HepG2 (cell line): ENCODE measurements at regions of chr7 and their contacts with region 1.

Region 1: DNA sequence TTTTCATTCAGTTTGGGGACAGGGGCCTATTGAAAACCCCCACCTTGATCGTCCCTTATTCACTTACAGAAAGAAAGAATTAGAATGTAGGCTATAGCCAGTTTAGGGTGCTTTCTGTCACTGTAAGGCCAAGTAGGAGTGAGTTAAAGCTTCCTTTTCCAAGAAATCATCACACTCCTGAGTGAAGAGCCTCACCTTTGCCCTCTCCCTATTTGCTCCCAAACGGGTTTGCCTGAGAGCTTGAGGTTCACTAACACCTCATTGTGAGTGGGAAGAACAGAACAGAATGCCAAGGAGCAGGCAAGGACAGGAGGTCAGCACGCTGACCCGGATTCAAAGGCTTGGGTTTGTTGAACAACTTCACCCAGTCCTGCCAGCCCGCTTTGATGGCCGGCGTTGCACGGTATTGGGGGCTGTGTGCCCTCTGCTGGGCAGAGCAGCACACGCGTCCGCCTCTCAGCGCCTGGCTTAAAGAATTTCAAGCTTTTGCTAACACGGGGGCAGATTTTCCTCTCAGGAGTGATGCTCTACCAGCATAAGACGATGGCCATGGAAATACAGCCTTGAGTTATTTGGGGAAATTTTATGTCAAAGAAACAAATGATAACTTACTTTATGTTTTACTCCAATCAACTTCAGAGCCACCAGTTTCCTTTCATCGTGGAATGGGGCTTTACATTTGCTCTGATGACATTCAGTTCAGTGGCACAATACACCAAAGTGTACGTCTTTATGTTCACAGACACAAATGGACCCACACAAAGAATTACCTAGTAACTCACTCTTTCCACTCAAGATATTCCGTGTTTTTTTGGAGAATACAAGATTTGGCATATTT is 470.0 kb downstream of the SUGCT start:
- DNase-seq: peak; percentile 29
- ATAC-seq: peak; percentile 99
- H3K4me3 ChIP-seq: no peak overlapping the region
- H3K27ac ChIP-seq: no peak overlapping the region
- H3K4me1 ChIP-seq: peaks cover 9% of the 10 kb centered on the region
- H3K27me3 ChIP-seq: no peaks in the 10 kb centered on the region
- CTCF ChIP-seq: peak; percentile 86
- EP300 ChIP-seq: peak in 1 of 2 experiments; percentile 9; a peak in 1 of 4 replicates
- POLR2A ChIP-seq: no peak
- RAD21 ChIP-seq: peak; percentile 91

Region 2: DNA sequence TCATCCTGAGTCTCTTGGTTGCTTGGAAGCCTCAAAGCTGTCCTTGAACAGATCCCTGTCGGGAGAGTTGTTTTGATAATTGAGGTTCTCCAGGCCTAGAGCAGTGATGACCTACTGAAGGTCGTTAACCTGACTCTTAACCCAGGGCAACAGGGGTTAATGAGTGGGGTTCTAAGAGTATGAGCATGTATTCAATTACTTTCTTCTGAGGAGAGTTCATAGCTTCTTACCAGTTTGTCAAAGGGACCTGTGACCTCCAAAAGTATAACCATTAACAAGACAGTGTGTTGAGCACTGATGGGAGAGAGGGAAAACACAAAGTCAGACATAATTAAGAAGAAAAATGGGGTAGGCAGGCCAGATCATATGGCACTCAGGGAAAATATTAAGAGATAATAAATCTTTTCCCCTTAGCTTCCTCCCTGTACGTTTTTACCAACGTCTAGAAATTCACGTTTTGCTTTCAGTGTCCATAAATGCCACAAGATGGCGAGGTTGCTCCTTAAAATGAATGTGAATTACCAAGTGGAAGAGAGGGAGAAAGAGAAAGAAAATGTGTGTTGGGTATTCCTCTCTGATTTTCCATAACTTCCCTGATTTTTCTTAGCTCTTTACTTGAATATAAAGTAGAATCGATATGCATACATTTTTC is 372.5 kb before region 1 on chr7:
- CTCF ChIA-PET with region 1: no interaction called
- POLR2A ChIA-PET with region 1: no interaction called
- in situ Hi-C with region 1: no loop called
- intact Hi-C with region 1: loop called (anchors 2 kb)
- DNase-seq: peak; percentile 43
- ATAC-seq: peak; percentile 75
- H3K4me3 ChIP-seq: no peak overlapping the region
- H3K27ac ChIP-seq: no peak overlapping the region
- H3K4me1 ChIP-seq: no peaks in the 10 kb centered on the region; the same call in 1 of the 2 replicates
- H3K27me3 ChIP-seq: no peaks in the 10 kb centered on the region
- CTCF ChIP-seq: peak; percentile 71
- EP300 ChIP-seq: no peak
- POLR2A ChIP-seq: no peak
- RAD21 ChIP-seq: no peak

Region 3: GRCh38 chr7:40329601-40330153 is 275.1 kb before region 1 on chr7:
- CTCF ChIA-PET with region 1: interaction called, 29 read pairs
- POLR2A ChIA-PET with region 1: no interaction called
- in situ Hi-C with region 1: loop called (anchors 5 kb)
- intact Hi-C with region 1: loop called (anchors 1 kb)
- DNase-seq: peak; percentile 52
- ATAC-seq: peak; percentile 52; the same call in 2 of the 3 replicates
- H3K4me3 ChIP-seq: no peak overlapping the region
- H3K27ac ChIP-seq: no peak overlapping the region
- H3K4me1 ChIP-seq: no peaks in the 10 kb centered on the region
- H3K27me3 ChIP-seq: no peaks in the 10 kb centered on the region
- CTCF ChIP-seq: peak; percentile 79
- EP300 ChIP-seq: no peak
- POLR2A ChIP-seq: no peak
- RAD21 ChIP-seq: peak; percentile 80

Region 4: GRCh38 chr7:40429826-40430225 is 175.0 kb before region 1 on chr7:
- CTCF ChIA-PET with region 1: no interaction called
- POLR2A ChIA-PET with region 1: no interaction called
- in situ Hi-C with region 1: no loop called
- intact Hi-C with region 1: no loop called
- DNase-seq: no peak
- ATAC-seq: no peak
- H3K4me3 ChIP-seq: no peak overlapping the region
- H3K27ac ChIP-seq: no peak overlapping the region
- H3K4me1 ChIP-seq: no peaks in the 10 kb centered on the region
- H3K27me3 ChIP-seq: no peaks in the 10 kb centered on the region
- CTCF ChIP-seq: no peak
- EP300 ChIP-seq: no peak
- POLR2A ChIP-seq: no peak
- RAD21 ChIP-seq: no peak

Region 5: DNA sequence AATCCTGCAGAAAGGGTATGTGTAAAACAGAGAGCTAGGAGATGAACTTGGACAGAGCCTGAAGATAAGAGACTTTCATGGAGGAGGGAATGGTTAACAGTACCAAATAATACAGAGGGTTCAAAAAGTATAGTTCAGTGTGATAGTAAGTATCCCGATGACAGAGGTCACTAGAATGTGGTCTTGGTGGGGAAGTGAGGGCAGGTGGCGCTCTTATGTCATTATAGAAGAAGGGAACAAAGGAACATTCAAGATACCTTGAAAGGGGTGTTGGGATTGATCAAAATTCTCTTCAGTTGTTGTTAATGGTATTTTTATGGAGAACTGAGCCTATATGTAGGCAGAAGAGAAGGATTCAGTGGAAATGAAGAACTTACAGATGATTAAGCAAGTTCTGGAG is 157.5 kb before region 1 on chr7:
- CTCF ChIA-PET with region 1: interaction called, 5 read pairs
- POLR2A ChIA-PET with region 1: no interaction called
- in situ Hi-C with region 1: no loop called
- intact Hi-C with region 1: loop called (anchors 2 kb)
- DNase-seq: no peak
- ATAC-seq: no peak
- H3K4me3 ChIP-seq: no peak overlapping the region
- H3K27ac ChIP-seq: no peak overlapping the region
- H3K4me1 ChIP-seq: no peaks in the 10 kb centered on the region
- H3K27me3 ChIP-seq: no peaks in the 10 kb centered on the region
- CTCF ChIP-seq: peak; percentile 53
- EP300 ChIP-seq: no peak
- POLR2A ChIP-seq: no peak
- RAD21 ChIP-seq: no peak